IMR-90 (cell line): ENCODE measurements at regions of chr10 and their contacts with region 1.

Region 1: DNA sequence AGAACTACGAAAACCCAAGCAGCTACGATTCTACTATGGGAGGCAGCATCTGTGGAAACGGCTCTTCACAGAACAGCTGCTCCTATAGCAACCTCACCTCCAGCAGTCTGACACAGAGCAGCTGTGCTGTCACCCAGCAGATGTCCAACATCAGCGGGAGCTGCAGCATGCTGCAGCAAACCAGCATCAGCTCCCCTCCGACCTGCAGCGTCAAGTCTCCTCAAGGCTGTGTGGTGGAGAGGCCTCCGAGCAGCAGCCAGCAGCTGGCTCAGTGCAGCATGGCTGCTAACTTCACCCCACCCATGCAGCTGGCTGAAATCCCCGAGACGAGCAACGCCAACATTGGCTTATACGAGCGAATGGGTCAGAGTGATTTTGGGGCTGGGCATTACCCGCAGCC is 81.6 kb upstream of the SAMD8 start:
- DNase-seq: peak; percentile 78
- ATAC-seq: peak; percentile 88
- H3K4me3 ChIP-seq: no peak overlapping the region
- H3K27ac ChIP-seq: peak overlapping the region; percentile 7; the same call in 1 of the 2 replicates
- H3K4me1 ChIP-seq: peaks cover 3% of the 10 kb centered on the region; the same call in 1 of the 2 replicates
- H3K27me3 ChIP-seq: no peaks in the 10 kb centered on the region
- CTCF ChIP-seq: no peak
- POLR2A ChIP-seq: no peak
- RAD21 ChIP-seq: no peak

Region 2: GRCh38 chr10:74262856-74263255 is 767.0 kb before region 1 on chr10:
- CTCF ChIA-PET with region 1: no interaction called
- POLR2A ChIA-PET with region 1: no interaction called
- dilution Hi-C with region 1: no loop called
- in situ Hi-C with region 1: loop called (anchors 10 kb)
- intact Hi-C with region 1: no loop called
- DNase-seq: no peak
- ATAC-seq: no peak
- H3K4me3 ChIP-seq: no peak overlapping the region
- H3K27ac ChIP-seq: no peak overlapping the region
- H3K4me1 ChIP-seq: peaks cover 2% of the 10 kb centered on the region; the same call in 1 of the 2 replicates
- H3K27me3 ChIP-seq: no peaks in the 10 kb centered on the region
- CTCF ChIP-seq: no peak
- POLR2A ChIP-seq: no peak
- RAD21 ChIP-seq: no peak